ENCODE measurements at regions of chr2 and their contacts with region 1.

Region 1: GRCh38 chr2:181536730-181537129 is 79.5 kb downstream of the ITGA4 start:
- DNase-seq: no peak
- H3K4me3 ChIP-seq: no peak overlapping the region
- H3K4me3 Mint-ChIP-seq: no peak overlapping the region
- H3K27ac ChIP-seq: no peak overlapping the region
- H3K27ac Mint-ChIP-seq: no peak overlapping the region
- H3K4me1 ChIP-seq: no peaks in the 10 kb centered on the region
- H3K4me1 Mint-ChIP-seq: no peaks in the 10 kb centered on the region
- H3K27me3 ChIP-seq: no peaks in the 10 kb centered on the region
- H3K27me3 Mint-ChIP-seq: no peaks in the 10 kb centered on the region
- CTCF ChIP-seq: no peak

Region 2: GRCh38 chr2:181334158-181334826 is 202.4 kb before region 1 on chr2:
- intact Hi-C with region 1: no loop called
- DNase-seq: no peak
- H3K4me3 ChIP-seq: no peak overlapping the region
- H3K4me3 Mint-ChIP-seq: no peak overlapping the region
- H3K27ac ChIP-seq: no peak overlapping the region
- H3K27ac Mint-ChIP-seq: no peak overlapping the region
- H3K4me1 ChIP-seq: no peaks in the 10 kb centered on the region
- H3K4me1 Mint-ChIP-seq: no peaks in the 10 kb centered on the region
- H3K27me3 ChIP-seq: no peaks in the 10 kb centered on the region
- H3K27me3 Mint-ChIP-seq: peaks cover 0 to 5% (median 1%) of the 10 kb centered on the region in 3 donors
- CTCF ChIP-seq: no peak

Region 3: DNA sequence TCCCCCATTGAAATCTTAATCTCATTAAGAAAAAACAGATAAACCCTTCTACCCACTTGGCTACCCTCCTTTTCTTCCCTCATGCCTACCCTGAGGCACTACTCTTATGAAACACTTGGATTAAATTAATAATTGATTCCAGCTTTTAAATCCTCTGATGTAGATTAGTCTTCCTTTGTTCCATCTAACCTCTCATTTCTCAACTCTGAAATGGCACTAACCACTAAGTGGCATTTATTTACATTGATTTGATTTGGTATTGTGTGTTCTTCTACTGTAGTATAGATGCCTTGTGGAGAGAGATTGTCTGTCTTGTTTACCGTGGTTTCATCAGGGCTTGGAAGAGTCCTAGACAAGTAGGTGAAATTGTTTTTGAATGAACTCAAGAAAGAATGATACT is 52.9 kb before region 1 on chr2:
- intact Hi-C with region 1: loop called in 1 of 2 experiments (anchors 10 kb)
- DNase-seq: no peak
- H3K4me3 ChIP-seq: no peak overlapping the region
- H3K4me3 Mint-ChIP-seq: no peak overlapping the region
- H3K27ac ChIP-seq: no peak overlapping the region
- H3K27ac Mint-ChIP-seq: peak overlapping the region in 3 of 7 donors; percentile 4 to 58 (median 41)
- H3K4me1 ChIP-seq: peaks cover 0 to 6% of the 10 kb centered on the region in 2 donors
- H3K4me1 Mint-ChIP-seq: peaks cover 10% of the 10 kb centered on the region
- H3K27me3 ChIP-seq: no peaks in the 10 kb centered on the region
- H3K27me3 Mint-ChIP-seq: no peaks in the 10 kb centered on the region
- CTCF ChIP-seq: no peak

Measured in CD14-positive monocyte (primary cell).